ENCODE measurements at regions of chr19 and their contacts with region 1.

Region 1: DNA sequence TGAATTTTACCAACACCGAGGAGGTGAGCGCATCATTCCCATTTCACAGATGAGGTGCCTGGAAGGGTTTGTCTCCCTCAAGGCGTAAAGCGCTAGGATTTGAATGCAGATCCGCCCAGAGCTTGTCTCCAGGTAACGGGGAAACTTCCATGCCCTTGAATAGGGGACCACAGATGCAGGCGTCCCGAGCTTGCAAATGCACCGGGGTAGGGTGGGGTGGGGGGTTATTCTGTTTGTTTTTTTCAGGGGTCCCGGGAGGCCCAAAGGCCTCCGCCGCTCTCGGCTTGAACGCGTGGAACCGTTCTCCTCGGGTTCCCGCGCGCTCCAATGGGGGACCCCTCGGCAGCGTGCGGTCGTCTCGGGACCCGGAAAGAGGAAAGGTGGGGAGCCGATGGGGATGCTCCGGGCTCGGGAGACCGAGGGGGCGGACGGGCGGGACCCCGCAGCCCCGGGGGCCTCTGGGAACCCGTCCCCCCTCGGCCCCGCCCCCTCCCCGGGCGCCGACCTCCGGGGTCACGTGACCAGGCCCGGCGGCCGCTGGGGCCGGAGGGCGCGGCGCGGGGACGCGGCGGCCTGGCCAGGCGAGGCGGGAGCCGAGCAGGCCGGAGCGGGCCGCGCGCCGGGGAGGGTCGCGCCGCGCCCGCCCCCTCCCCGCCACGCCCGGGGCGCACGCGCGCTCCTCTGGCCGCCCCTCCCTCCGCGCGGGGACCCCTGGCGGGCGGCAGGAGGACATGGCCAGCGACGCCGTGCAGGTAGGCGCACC is at the start of gene PKN1:
- DNase-seq: peak; percentile 48
- H3K4me3 Mint-ChIP-seq: peak within 1 kb of the TSS; percentile 71
- H3K27ac Mint-ChIP-seq: peak within 1 kb of the TSS; percentile 90
- H3K4me1 Mint-ChIP-seq: peaks cover 41% of the 10 kb centered on the region
- H3K27me3 Mint-ChIP-seq: peaks cover 5% of the 10 kb centered on the region
- total RNA-seq, gene PKN1: 238 to 242 TPM

Region 2: DNA sequence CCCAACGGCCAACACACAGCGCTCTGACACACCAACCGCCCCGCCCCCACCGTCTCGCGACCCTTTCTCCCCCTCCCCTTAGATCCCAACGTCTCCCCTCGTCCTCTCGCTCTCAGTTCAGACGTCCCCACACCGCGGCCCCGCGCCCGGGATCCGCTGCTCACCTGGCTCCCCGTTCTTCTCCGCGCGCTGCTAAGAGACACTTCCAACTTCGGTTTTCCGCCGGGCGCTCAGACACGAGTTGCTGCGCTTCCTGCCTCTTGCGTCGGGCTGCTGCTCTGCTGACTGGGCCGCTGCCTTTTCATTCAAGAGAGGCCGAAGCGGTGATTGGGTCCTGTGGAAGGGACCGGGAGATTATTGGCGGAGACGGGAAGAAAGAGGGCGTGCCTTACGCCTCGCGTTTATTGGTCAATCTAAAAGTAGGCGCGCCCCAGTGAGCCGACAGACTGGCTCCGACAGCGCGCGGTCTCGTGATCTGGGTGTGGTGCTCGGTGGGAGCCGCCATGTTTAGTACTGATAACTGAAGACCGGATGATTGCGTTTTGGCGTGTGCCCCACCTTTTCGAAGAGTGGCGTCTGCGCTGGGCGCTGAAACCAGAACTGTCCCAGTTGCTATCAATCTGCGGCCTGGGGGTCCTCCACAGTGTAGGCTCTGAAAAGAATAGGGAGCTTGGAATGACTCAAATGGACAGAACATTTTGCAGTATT is 13.7 kb before region 1 on chr19 and contains the start of gene DDX39A:
- CTCF ChIA-PET with region 1: interaction called, 16 read pairs
- POLR2A ChIA-PET with region 1: interaction called, 3 read pairs
- DNase-seq: peak; percentile 99
- H3K4me3 Mint-ChIP-seq: peak within 1 kb of the TSS; percentile 99
- H3K27ac Mint-ChIP-seq: peak within 1 kb of the TSS; percentile 99
- H3K4me1 Mint-ChIP-seq: peaks cover 37% of the 10 kb centered on the region
- H3K27me3 Mint-ChIP-seq: no peaks in the 10 kb centered on the region
- total RNA-seq, gene DDX39A: 232 to 269 TPM

Measured in activated CD4-positive, alpha-beta T cell treated with anti-CD3 and anti-CD28 coated beads, Interleukin-2, amount 10 ng/mL, durations not matched to agents 7 days and 5 days (primary cell).